GM10248 (cell line): ENCODE measurements at regions of chr10 and their contacts with region 1.

Region 1: GRCh38 chr10:28545967-28546644 is 13.2 kb downstream of the WAC start:
- DNase-seq: no peak
- CTCF ChIP-seq: no peak

Region 2: GRCh38 chr10:28535446-28535845 is 10.7 kb before region 1 on chr10:
- CTCF ChIA-PET with region 1: interaction called, 15 read pairs
- POLR2A ChIA-PET with region 1: interaction called, 4 read pairs
- DNase-seq: no peak
- CTCF ChIP-seq: no peak

Region 3: GRCh38 chr10:28556142-28556541 is 10.0 kb after region 1 on chr10:
- CTCF ChIA-PET with region 1: interaction called, 9 read pairs
- POLR2A ChIA-PET with region 1: interaction called, 10 read pairs
- DNase-seq: no peak
- CTCF ChIP-seq: no peak

Region 4: DNA sequence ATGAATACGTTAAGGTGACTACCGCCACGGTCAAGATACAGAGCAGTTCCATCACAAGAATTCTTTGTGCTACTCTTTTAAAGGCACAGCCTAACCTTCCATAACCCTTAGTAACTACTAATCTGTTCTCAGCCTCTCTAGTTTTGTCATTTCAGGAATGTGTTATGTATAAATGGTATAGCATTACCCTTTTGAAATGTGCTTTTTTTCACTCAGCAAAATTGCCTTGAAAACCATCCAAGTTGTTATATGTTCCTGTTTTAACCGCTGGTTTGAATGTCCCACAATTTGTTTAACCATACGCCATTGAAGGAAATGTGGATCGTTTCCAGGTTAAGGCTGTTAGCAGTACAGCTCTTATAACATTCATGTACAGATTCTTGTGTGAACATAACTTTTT is 18.8 kb after region 1 on chr10:
- CTCF ChIA-PET with region 1: interaction called, 10 read pairs
- POLR2A ChIA-PET with region 1: interaction called, 3 read pairs
- DNase-seq: no peak
- CTCF ChIP-seq: no peak